Activated CD4-positive, alpha-beta memory T cell treated with anti-CD3 and anti-CD28 coated beads, Interleukin-2, amount 10 ng/mL, durations not matched to agents 7 days and 5 days (primary cell): ENCODE measurements at regions of chr19 and their contacts with region 1.

Region 1: GRCh38 chr19:15379083-15379995 is at the start of gene AKAP8:
- DNase-seq: peak; percentile 98
- H3K4me3 Mint-ChIP-seq: peak within 1 kb of the TSS; percentile 87
- H3K27ac Mint-ChIP-seq: peak within 1 kb of the TSS; percentile 99
- H3K4me1 Mint-ChIP-seq: peaks cover 36% of the 10 kb centered on the region
- H3K27me3 Mint-ChIP-seq: no peaks in the 10 kb centered on the region
- total RNA-seq, gene AKAP8: 43.8 to 45.9 TPM

Region 2: GRCh38 chr19:15125232-15126067 is 253.9 kb before region 1 on chr19:
- CTCF ChIA-PET with region 1: no interaction called
- POLR2A ChIA-PET with region 1: interaction called, 15 read pairs
- DNase-seq: peak; percentile 98
- H3K4me3 Mint-ChIP-seq: peak overlapping the region; percentile 85
- H3K27ac Mint-ChIP-seq: peak overlapping the region; percentile 96
- H3K4me1 Mint-ChIP-seq: peaks cover 31% of the 10 kb centered on the region
- H3K27me3 Mint-ChIP-seq: peaks cover 3% of the 10 kb centered on the region

Region 3: GRCh38 chr19:15332311-15332996 is 46.9 kb before region 1 on chr19 and contains the start of gene BRD4:
- CTCF ChIA-PET with region 1: interaction called, 3 read pairs
- POLR2A ChIA-PET with region 1: interaction called, 75 read pairs
- DNase-seq: peak; percentile 80
- H3K4me3 Mint-ChIP-seq: peak within 1 kb of the TSS; percentile 95
- H3K27ac Mint-ChIP-seq: peak within 1 kb of the TSS; percentile 91
- H3K4me1 Mint-ChIP-seq: peaks cover 37% of the 10 kb centered on the region
- H3K27me3 Mint-ChIP-seq: no peaks in the 10 kb centered on the region
- total RNA-seq, gene BRD4: 103 to 110 TPM

Region 4: GRCh38 chr19:15358918-15359317 is 20.4 kb before region 1 on chr19:
- CTCF ChIA-PET with region 1: interaction called, 18 read pairs
- POLR2A ChIA-PET with region 1: interaction called, 49 read pairs
- DNase-seq: no peak
- H3K4me3 Mint-ChIP-seq: no peak overlapping the region
- H3K27ac Mint-ChIP-seq: peak overlapping the region; percentile 70
- H3K4me1 Mint-ChIP-seq: peaks cover 21% of the 10 kb centered on the region
- H3K27me3 Mint-ChIP-seq: no peaks in the 10 kb centered on the region

Region 5: GRCh38 chr19:15432629-15433518 is 53.5 kb after region 1 on chr19:
- CTCF ChIA-PET with region 1: no interaction called
- POLR2A ChIA-PET with region 1: interaction called, 24 read pairs
- DNase-seq: peak; percentile 95
- H3K4me3 Mint-ChIP-seq: peak overlapping the region; percentile 93
- H3K27ac Mint-ChIP-seq: peak overlapping the region; percentile 94
- H3K4me1 Mint-ChIP-seq: peaks cover 36% of the 10 kb centered on the region
- H3K27me3 Mint-ChIP-seq: no peaks in the 10 kb centered on the region

Region 6: GRCh38 chr19:15555759-15556633 is 176.7 kb after region 1 on chr19:
- CTCF ChIA-PET with region 1: interaction called, 33 read pairs
- POLR2A ChIA-PET with region 1: interaction called, 10 read pairs
- DNase-seq: peak; percentile 97
- H3K4me3 Mint-ChIP-seq: peak overlapping the region; percentile 85
- H3K27ac Mint-ChIP-seq: peak overlapping the region; percentile 76
- H3K4me1 Mint-ChIP-seq: peaks cover 29% of the 10 kb centered on the region
- H3K27me3 Mint-ChIP-seq: peaks cover 9% of the 10 kb centered on the region